Ascending aorta (tissue), 2 donors: ENCODE measurements at regions of chr6 and their contacts with region 1.

Region 1: GRCh38 chr6:33454009-33454946 is at the start of gene ZBTB9:
- DNase-seq: peak; percentile 92 to 98
- H3K4me3 ChIP-seq: peak within 1 kb of the TSS; percentile 87 to 94
- H3K27ac ChIP-seq: peak within 1 kb of the TSS; percentile 70 to 73
- H3K4me1 ChIP-seq: peaks cover 6 to 17% of the 10 kb centered on the region in 2 donors
- H3K27me3 ChIP-seq: no peaks in the 10 kb centered on the region
- CTCF ChIP-seq: no peak
- total RNA-seq, gene ZBTB9: 45.8 TPM

Region 2: GRCh38 chr6:32685603-32686002 is 768.7 kb before region 1 on chr6:
- intact Hi-C with region 1: no loop called
- DNase-seq: no peak
- H3K4me3 ChIP-seq: no peak overlapping the region
- H3K27ac ChIP-seq: no peak overlapping the region
- H3K4me1 ChIP-seq: no peaks in the 10 kb centered on the region
- H3K27me3 ChIP-seq: no peaks in the 10 kb centered on the region
- CTCF ChIP-seq: no peak

Region 3: DNA sequence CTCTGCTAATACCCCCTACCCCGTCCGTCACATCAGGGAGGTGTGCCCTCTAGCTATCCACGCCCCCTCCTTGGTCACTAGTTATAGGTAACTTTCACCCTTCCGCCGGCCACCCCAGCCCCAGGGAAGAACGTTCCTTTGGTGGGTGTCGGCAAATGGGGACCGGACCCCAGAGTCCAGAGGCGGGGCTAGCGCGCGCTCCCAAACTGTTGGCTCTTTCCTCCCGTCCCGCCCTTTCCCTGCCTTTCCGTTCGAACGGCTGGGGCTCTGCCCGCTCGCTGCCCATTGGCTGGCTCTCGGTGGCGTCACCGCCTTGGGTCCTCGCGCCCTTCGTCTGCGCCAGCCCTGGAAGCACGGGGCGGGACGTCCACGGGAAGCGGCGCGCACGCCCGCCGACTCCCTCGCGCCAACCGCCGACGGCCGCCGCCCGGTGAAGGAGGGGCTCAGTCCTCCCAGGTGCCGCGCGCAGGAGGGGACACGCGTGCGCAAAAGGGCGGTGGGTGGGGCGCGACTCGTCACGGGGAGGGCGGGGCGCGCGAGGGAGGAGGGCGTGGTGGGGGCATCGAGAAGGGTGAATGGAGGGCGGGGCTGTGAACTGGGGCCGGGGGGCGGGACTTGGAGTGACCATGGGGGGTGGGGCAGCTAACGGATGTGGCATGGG is 44.1 kb before region 1 on chr6:
- intact Hi-C with region 1: loop called (anchors 2 kb)
- DNase-seq: peak; percentile 89 to 98
- H3K4me3 ChIP-seq: peak overlapping the region; percentile 84 to 98
- H3K27ac ChIP-seq: peak overlapping the region; percentile 96 to 99
- H3K4me1 ChIP-seq: peaks cover 10% of the 10 kb centered on the region in 2 donors
- H3K27me3 ChIP-seq: no peaks in the 10 kb centered on the region
- CTCF ChIP-seq: no peak

Region 4: DNA sequence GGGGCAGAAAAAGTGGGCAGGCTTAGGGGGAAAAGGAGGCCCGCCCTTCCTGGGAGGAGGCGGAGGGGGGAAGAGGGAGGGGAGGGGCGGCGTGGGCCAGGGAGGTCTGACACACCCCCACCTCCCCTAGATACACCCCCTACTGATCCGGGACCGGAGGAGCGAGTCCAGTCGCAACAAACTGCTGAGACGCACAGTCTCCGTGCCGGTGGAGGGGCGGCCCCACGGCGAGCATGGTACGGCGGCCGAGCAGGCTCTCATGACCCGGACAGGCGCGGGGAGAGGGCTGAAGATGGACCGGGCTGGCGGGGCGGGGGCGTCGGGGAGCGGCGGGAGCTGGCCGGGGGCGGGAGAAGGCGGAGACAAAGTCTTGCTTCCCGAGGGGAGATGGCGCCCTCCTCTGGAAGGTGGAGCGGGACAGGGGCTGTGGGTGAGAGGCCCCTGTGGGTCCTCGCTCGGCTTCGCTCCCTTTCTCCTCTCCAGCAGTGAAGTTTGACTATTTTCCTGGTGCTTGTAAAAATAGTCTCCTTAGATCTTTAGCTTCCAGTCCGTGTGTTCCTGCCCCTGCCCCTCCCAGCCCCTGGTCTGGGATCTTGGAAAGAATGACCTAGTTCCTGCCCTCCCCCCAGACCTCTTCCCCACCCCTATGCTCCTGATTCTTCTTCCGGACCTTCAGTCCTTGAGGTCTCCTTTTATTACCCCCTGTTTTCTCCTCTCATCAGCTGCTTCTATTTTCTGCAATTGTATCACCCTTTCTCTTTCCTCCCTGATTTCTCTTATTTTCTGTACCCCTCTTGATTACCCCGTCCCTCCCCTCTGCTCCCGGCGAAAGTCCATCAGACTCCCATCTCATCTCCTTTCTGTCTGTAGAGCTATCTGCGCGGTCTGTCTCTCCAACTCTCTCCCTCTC is 28.4 kb before region 1 on chr6:
- intact Hi-C with region 1: loop called (anchors 2 kb)
- DNase-seq: peak; percentile 56 to 92
- H3K4me3 ChIP-seq: peak overlapping the region; percentile 53 to 79
- H3K27ac ChIP-seq: peak overlapping the region; percentile 92 to 95
- H3K4me1 ChIP-seq: peaks cover 17 to 23% of the 10 kb centered on the region in 2 donors
- H3K27me3 ChIP-seq: no peaks in the 10 kb centered on the region
- CTCF ChIP-seq: peak; percentile 27 to 74 (median 63)

Region 5: GRCh38 chr6:33570806-33571636 is 116.7 kb after region 1 on chr6:
- intact Hi-C with region 1: loop called (anchors 5 kb)
- DNase-seq: peak; percentile 49 to 91
- H3K4me3 ChIP-seq: peak overlapping the region; percentile 59 to 90
- H3K27ac ChIP-seq: peak overlapping the region; percentile 78 to 92
- H3K4me1 ChIP-seq: peaks cover 4 to 6% of the 10 kb centered on the region in 2 donors
- H3K27me3 ChIP-seq: no peaks in the 10 kb centered on the region
- CTCF ChIP-seq: no peak

Region 6: GRCh38 chr6:33711140-33712129 is 257.2 kb after region 1 on chr6 and contains the start of gene UQCC2:
- intact Hi-C with region 1: loop called (anchors 1 kb)
- DNase-seq: peak; percentile 80 to 97
- H3K4me3 ChIP-seq: peak within 1 kb of the TSS; percentile 79 to 86
- H3K27ac ChIP-seq: peak within 1 kb of the TSS; percentile 81 to 93
- H3K4me1 ChIP-seq: peaks cover 6 to 9% of the 10 kb centered on the region in 2 donors
- H3K27me3 ChIP-seq: no peaks in the 10 kb centered on the region
- CTCF ChIP-seq: peak; percentile 52 to 73 (median 59)
- total RNA-seq, gene UQCC2: 2.6 TPM